ENCODE measurements at regions of chr11 and their contacts with region 1.

Region 1: GRCh38 chr11:126188332-126189108 is 22.9 kb downstream of the RPUSD4 start:
- DNase-seq: peak; percentile 89
- H3K4me3 ChIP-seq: peak overlapping the region; percentile 52
- H3K27ac ChIP-seq: peak overlapping the region; percentile 85
- H3K4me1 ChIP-seq: peaks cover 34% of the 10 kb centered on the region
- CTCF ChIP-seq: no peak

Region 2: GRCh38 chr11:126062679-126063506 is 125.6 kb before region 1 on chr11 and contains the start of gene CDON:
- CTCF ChIA-PET with region 1: no interaction called
- POLR2A ChIA-PET with region 1: no interaction called
- intact Hi-C with region 1: loop called (anchors 1 kb)
- DNase-seq: peak; percentile 94
- H3K4me3 ChIP-seq: peak within 1 kb of the TSS; percentile 71
- H3K27ac ChIP-seq: no peak within 1 kb of the TSS
- H3K4me1 ChIP-seq: peaks cover 5% of the 10 kb centered on the region
- CTCF ChIP-seq: no peak
- total RNA-seq, gene CDON: 1.5 and 2.0 TPM in 2 replicates

Region 3: GRCh38 chr11:126140932-126141291 is 47.6 kb before region 1 on chr11:
- CTCF ChIA-PET with region 1: no interaction called
- POLR2A ChIA-PET with region 1: no interaction called
- intact Hi-C with region 1: no loop called
- DNase-seq: no peak
- H3K4me3 ChIP-seq: no peak overlapping the region
- H3K27ac ChIP-seq: no peak overlapping the region
- H3K4me1 ChIP-seq: no peaks in the 10 kb centered on the region
- CTCF ChIP-seq: no peak

Measured in OCI-LY7 (cell line).